KBM-7 (cell line): ENCODE measurements at regions of chr9 and their contacts with region 1.

Region 1: GRCh38 chr9:38284588-38285051 is 107.9 kb upstream of the ALDH1B1 start:
- DNase-seq: no peak

Region 2: GRCh38 chr9:38160613-38161215 is 123.9 kb before region 1 on chr9:
- in situ Hi-C with region 1: loop called (anchors 25 kb)
- DNase-seq: peak; percentile 57